ENCODE measurements at regions of chr4 and their contacts with region 1.

Region 1: GRCh38 chr4:73922766-73923630 is 53.8 kb downstream of the CXCL1 start:
- DNase-seq: peak; percentile 69
- H3K4me3 Mint-ChIP-seq: no peak overlapping the region
- H3K27ac Mint-ChIP-seq: no peak overlapping the region
- H3K4me1 Mint-ChIP-seq: peaks cover 26% of the 10 kb centered on the region
- H3K27me3 Mint-ChIP-seq: no peaks in the 10 kb centered on the region
- CTCF ChIP-seq: peak; percentile 53

Region 2: GRCh38 chr4:73308286-73308685 is 614.7 kb before region 1 on chr4:
- CTCF ChIA-PET with region 1: no interaction called
- POLR2A ChIA-PET with region 1: no interaction called
- intact Hi-C with region 1: loop called (anchors 10 kb)
- DNase-seq: peak; percentile 10
- H3K4me3 Mint-ChIP-seq: no peak overlapping the region
- H3K27ac Mint-ChIP-seq: no peak overlapping the region
- H3K4me1 Mint-ChIP-seq: peaks cover 11% of the 10 kb centered on the region
- H3K27me3 Mint-ChIP-seq: no peaks in the 10 kb centered on the region
- CTCF ChIP-seq: peak; percentile 22

Region 3: GRCh38 chr4:73376976-73377375 is 546.0 kb before region 1 on chr4:
- CTCF ChIA-PET with region 1: no interaction called
- POLR2A ChIA-PET with region 1: no interaction called
- intact Hi-C with region 1: no loop called
- DNase-seq: no peak
- H3K4me3 Mint-ChIP-seq: no peak overlapping the region
- H3K27ac Mint-ChIP-seq: no peak overlapping the region
- H3K4me1 Mint-ChIP-seq: no peaks in the 10 kb centered on the region
- H3K27me3 Mint-ChIP-seq: peaks cover 12% of the 10 kb centered on the region
- CTCF ChIP-seq: no peak

Region 4: GRCh38 chr4:73573794-73574406 is 349.1 kb before region 1 on chr4:
- CTCF ChIA-PET with region 1: interaction called, 8 read pairs
- POLR2A ChIA-PET with region 1: no interaction called
- intact Hi-C with region 1: loop called (anchors 5 kb)
- DNase-seq: peak; percentile 83
- H3K4me3 Mint-ChIP-seq: no peak overlapping the region
- H3K27ac Mint-ChIP-seq: no peak overlapping the region
- H3K4me1 Mint-ChIP-seq: no peaks in the 10 kb centered on the region
- H3K27me3 Mint-ChIP-seq: no peaks in the 10 kb centered on the region
- CTCF ChIP-seq: peak; percentile 83

Region 5: DNA sequence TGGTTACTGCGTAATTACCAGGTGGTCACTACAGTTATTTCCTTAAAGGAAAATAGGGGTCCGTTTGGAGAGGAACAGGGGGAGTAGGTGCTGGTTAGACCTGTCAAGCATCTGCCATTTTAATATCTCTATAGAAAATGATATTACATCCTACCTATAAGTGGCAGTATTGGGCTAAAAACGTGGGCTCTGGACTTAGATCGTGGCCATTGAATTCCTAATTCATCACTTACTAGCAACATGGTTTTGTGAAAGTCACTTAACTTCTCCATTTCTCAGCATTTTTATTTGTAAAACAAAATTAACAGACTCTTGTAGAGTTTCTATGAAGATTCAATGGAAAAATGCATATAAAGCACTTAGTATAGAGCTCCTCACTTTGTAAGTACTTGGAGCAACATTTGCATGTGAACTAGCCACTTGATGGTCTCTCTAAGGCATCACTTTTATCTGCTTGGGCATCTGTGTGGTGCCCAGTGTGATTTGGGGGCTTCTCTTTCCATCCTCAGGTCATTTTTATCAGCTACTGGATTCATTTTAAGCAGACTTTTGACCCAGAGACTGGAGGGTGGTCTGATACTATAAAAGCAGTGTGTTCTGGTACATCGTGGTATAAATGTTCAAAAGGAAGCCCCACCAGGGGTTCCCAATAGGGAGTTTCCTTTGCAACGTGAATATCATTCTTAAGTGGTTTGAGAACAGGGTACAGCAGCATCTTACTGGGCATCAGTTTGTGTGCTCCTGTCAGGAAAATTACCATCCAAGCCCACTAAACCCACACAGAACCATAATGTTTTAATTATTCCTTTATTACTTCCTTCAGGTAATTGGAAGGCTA is 260.1 kb before region 1 on chr4:
- CTCF ChIA-PET with region 1: interaction called, 34 read pairs
- POLR2A ChIA-PET with region 1: interaction called, 8 read pairs
- intact Hi-C with region 1: loop called (anchors 1 kb)
- DNase-seq: peak; percentile 70
- H3K4me3 Mint-ChIP-seq: no peak overlapping the region
- H3K27ac Mint-ChIP-seq: peak overlapping the region; percentile 23
- H3K4me1 Mint-ChIP-seq: peaks cover 7% of the 10 kb centered on the region
- H3K27me3 Mint-ChIP-seq: no peaks in the 10 kb centered on the region
- CTCF ChIP-seq: peak; percentile 64

Region 6: GRCh38 chr4:73803213-73803612 is 119.8 kb before region 1 on chr4:
- CTCF ChIA-PET with region 1: no interaction called
- POLR2A ChIA-PET with region 1: no interaction called
- intact Hi-C with region 1: loop called (anchors 1 kb)
- DNase-seq: no peak
- H3K4me3 Mint-ChIP-seq: no peak overlapping the region
- H3K27ac Mint-ChIP-seq: no peak overlapping the region
- H3K4me1 Mint-ChIP-seq: no peaks in the 10 kb centered on the region
- H3K27me3 Mint-ChIP-seq: no peaks in the 10 kb centered on the region
- CTCF ChIP-seq: no peak

Region 7: GRCh38 chr4:73952352-73952751 is 29.4 kb after region 1 on chr4:
- CTCF ChIA-PET with region 1: no interaction called
- POLR2A ChIA-PET with region 1: no interaction called
- intact Hi-C with region 1: no loop called
- DNase-seq: no peak
- H3K4me3 Mint-ChIP-seq: no peak overlapping the region
- H3K27ac Mint-ChIP-seq: no peak overlapping the region
- H3K4me1 Mint-ChIP-seq: no peaks in the 10 kb centered on the region
- H3K27me3 Mint-ChIP-seq: no peaks in the 10 kb centered on the region
- CTCF ChIP-seq: no peak

Region 8: GRCh38 chr4:74038161-74039064 is 115.4 kb after region 1 on chr4 and contains the start of gene CXCL3:
- CTCF ChIA-PET with region 1: interaction called, 4 read pairs
- POLR2A ChIA-PET with region 1: no interaction called
- intact Hi-C with region 1: loop called (anchors 1 kb)
- DNase-seq: peak; percentile 64
- H3K4me3 Mint-ChIP-seq: peak within 1 kb of the TSS; percentile 86
- H3K27ac Mint-ChIP-seq: peak within 1 kb of the TSS; percentile 81
- H3K4me1 Mint-ChIP-seq: peaks cover 37% of the 10 kb centered on the region
- H3K27me3 Mint-ChIP-seq: no peaks in the 10 kb centered on the region
- CTCF ChIP-seq: peak; percentile 40
- total RNA-seq, gene CXCL3: 9.2 and 9.8 TPM in 2 replicates

Region 9: GRCh38 chr4:74133786-74134499 is 210.9 kb after region 1 on chr4:
- CTCF ChIA-PET with region 1: interaction called, 5 read pairs
- POLR2A ChIA-PET with region 1: no interaction called
- intact Hi-C with region 1: loop called (anchors 1 kb)
- DNase-seq: peak; percentile 88
- H3K4me3 Mint-ChIP-seq: no peak overlapping the region
- H3K27ac Mint-ChIP-seq: peak overlapping the region; percentile 44
- H3K4me1 Mint-ChIP-seq: peaks cover 14% of the 10 kb centered on the region
- H3K27me3 Mint-ChIP-seq: no peaks in the 10 kb centered on the region
- CTCF ChIP-seq: peak; percentile 68